Activated CD4-positive, alpha-beta T cell treated with anti-CD3 and anti-CD28 coated beads for 36 hours (primary cell): ENCODE measurements at regions of chr10 and their contacts with region 1.

Region 1: DNA sequence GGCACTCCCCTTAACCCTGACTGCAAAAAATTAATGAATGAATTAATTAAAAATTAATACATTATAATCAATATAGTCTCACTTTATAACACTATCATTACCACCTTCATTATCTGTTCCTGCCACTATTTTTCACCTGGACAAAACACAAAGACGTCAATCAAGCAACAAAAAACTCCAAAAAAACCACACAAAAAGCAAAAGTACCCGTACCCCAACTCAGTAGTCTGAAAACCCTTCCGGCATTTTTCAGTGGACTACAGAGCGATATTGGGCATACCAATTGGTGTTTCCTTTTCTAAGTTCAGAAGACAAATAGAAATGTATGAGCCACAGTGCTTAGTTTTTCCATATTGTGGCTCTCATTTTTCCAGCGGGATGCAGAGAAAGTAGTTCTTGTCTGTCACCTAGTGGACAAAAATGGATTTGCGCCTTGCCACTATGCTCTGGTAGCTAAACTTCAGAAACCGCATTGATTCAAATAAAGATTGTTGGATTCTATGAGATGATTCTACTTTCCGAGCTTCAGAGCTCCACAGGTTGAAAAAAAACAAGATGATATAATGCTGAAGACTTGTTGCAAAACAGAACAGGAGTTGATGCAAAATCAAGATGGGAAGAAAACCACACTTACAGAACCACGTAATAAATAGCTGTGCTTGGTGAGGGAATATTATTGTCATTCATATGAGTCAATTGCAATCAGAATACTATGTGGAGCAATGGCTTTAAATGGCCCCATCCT is 50.6 kb upstream of the ITGB1 start:
- DNase-seq: peak; percentile 80
- ATAC-seq: peak; percentile 61
- H3K4me3 Mint-ChIP-seq: peak overlapping the region; percentile 40
- H3K27ac Mint-ChIP-seq: peak overlapping the region; percentile 67
- H3K4me1 Mint-ChIP-seq: peaks cover 41% of the 10 kb centered on the region
- H3K27me3 Mint-ChIP-seq: peaks cover 7% of the 10 kb centered on the region

Region 2: DNA sequence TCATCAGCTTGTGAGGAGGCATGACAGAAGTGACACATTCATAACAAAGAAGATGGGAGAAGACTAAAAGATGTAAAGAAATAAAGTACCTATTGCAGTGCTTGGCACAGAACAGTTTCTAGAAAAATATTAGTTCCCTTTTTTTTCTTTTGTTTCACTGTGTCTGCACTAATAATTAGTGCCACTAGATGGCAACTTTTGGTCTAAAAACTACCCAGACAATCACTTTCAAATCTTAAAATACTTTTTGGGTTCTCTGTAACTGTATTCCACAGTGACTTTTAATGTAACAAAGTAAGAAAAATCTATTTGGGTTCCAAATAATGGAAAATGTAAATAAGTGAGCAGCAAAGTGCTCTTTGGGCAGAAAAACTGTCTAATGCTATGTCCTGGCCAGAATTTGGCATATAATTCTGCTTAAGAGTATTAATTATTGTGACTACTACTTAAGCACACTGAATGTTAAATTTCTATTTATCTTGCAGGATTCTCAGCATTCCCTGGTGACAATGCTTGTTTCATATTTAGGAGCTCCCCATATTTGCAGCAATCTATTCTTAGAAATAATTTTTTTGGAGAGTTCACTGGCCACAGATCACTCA is 817.7 kb before region 1 on chr10:
- CTCF ChIA-PET with region 1: no interaction called
- POLR2A ChIA-PET with region 1: no interaction called
- intact Hi-C with region 1: loop called in 1 of 2 experiments (anchors 1 kb)
- DNase-seq: no peak
- ATAC-seq: no peak
- H3K4me3 Mint-ChIP-seq: no peak overlapping the region
- H3K27ac Mint-ChIP-seq: no peak overlapping the region
- H3K4me1 Mint-ChIP-seq: peaks cover 2% of the 10 kb centered on the region
- H3K27me3 Mint-ChIP-seq: no peaks in the 10 kb centered on the region

Region 3: DNA sequence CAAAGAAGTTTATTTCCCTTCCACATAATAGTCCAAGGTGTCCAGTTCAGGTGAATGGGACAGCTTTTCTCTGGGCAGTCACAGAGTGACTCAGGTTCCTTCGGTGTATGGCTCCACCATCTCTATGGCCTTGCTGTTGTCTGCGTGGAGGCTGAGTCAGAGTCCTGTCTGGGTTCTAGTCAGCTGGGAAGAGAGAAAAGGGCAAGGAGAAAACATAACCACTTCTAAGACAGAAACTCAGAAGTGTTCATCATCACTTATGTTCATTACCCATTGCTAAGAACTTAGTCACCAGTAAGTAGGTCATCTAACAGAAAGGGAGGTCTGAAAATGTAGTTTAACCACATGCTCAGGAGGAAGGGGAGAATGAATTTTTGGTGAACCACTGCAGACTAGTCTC is 595.2 kb before region 1 on chr10:
- CTCF ChIA-PET with region 1: no interaction called
- POLR2A ChIA-PET with region 1: no interaction called
- intact Hi-C with region 1: no loop called
- DNase-seq: peak; percentile 73
- ATAC-seq: peak; percentile 98
- H3K4me3 Mint-ChIP-seq: no peak overlapping the region
- H3K27ac Mint-ChIP-seq: no peak overlapping the region
- H3K4me1 Mint-ChIP-seq: peaks cover 9% of the 10 kb centered on the region
- H3K27me3 Mint-ChIP-seq: no peaks in the 10 kb centered on the region

Region 4: DNA sequence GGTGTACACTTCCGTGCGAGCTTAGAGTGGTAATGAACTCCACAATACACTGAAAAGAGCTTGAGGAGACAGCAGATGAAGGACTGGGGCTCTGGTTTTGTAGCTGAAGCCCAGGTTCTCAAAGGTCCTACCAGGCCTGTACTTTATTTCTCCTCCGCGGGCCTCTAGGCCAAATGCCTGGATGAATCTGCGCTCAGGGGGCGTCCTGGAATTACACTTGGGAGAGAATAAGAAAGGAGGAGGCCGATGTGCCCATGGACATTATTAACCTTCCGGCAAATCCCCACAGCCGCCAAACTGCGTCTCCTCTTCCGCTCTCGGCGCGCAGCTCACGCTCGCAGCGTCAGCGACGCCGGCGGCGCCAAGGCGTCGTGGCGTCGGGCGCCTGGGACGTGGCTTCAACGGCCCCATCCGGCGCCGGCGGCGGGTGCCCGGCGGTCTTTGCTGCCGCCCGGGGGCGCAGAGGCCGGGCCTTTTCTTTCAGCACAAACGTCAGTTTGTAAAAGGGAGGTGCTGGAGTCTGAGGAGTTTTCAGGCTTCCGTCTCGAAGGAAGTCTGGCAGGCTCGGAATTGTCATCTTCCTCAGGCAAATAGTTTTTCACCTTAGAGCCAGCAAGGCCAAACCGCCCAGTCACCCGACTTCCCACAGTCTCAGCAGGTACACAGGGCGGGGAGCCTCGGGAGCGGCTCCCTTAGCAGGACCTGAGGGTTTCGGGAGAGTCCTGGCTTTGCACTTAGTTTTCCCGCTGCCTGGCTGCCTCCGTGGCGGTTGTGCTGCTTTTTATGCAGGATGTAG is 562.7 kb before region 1 on chr10 and contains the start of gene CCDC7:
- CTCF ChIA-PET with region 1: no interaction called
- POLR2A ChIA-PET with region 1: no interaction called
- intact Hi-C with region 1: loop called in 1 of 2 experiments (anchors 2 kb)
- DNase-seq: peak; percentile 91
- ATAC-seq: peak; percentile 97
- H3K4me3 Mint-ChIP-seq: peak within 1 kb of the TSS; percentile 82
- H3K27ac Mint-ChIP-seq: peak within 1 kb of the TSS; percentile 99
- H3K4me1 Mint-ChIP-seq: peaks cover 10% of the 10 kb centered on the region
- H3K27me3 Mint-ChIP-seq: no peaks in the 10 kb centered on the region
- total RNA-seq, gene CCDC7: 9.0 TPM

Region 5: GRCh38 chr10:32795598-32796183 is 213.0 kb before region 1 on chr10:
- CTCF ChIA-PET with region 1: interaction called, 5 read pairs
- POLR2A ChIA-PET with region 1: no interaction called
- intact Hi-C with region 1: loop called (anchors 1 kb)
- DNase-seq: no peak
- ATAC-seq: no peak
- H3K4me3 Mint-ChIP-seq: no peak overlapping the region
- H3K27ac Mint-ChIP-seq: no peak overlapping the region
- H3K4me1 Mint-ChIP-seq: peaks cover 2% of the 10 kb centered on the region
- H3K27me3 Mint-ChIP-seq: no peaks in the 10 kb centered on the region

Region 6: DNA sequence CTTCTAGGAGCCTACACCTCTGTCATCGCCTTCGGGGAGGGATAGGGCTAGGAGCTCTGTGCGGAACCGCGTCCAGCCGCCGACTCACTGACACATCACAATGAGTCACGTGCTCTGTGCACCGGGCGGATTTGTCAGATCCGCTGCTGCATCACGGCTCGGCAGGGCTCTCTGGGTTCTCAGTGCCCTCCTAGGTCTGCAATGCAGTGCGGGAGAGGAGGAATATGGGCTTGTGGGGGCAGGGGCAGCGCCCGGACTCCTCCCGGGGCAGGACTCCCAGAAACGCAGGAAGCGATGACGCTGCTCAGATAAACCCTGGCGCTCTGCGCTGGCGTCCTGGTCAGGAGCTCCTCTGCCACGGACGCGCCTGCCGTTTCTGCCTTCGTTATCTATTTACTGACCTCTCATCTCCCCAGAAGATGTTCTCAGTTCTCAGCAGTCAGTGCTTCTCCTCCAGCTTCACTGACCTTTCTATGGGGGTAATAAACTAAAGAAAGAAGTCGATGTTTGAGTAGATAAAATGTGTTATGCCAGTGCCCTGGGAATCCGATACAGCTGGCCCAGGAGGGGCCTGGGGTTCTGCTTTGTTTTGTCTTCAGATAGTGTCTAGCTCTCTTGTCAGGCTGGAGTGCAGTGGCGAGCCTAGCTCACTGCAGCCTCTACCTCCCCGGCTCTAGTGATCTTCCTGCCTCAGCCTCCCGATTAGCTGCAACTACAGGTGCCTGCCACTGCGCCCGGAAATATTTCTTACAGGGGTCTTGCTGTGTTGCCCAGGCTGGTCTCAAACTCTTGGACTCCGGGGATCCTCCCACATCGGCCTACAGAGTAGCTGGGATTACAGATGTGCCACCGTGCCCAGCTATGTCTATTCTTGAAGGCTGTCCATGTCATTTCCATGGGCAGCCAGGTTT is 27.9 kb before region 1 on chr10:
- CTCF ChIA-PET with region 1: interaction called, 11 read pairs
- POLR2A ChIA-PET with region 1: no interaction called
- intact Hi-C with region 1: loop called (anchors 1 to 2 kb)
- DNase-seq: peak; percentile 92
- ATAC-seq: peak; percentile 99
- H3K4me3 Mint-ChIP-seq: peak overlapping the region; percentile 83
- H3K27ac Mint-ChIP-seq: peak overlapping the region; percentile 91
- H3K4me1 Mint-ChIP-seq: peaks cover 29% of the 10 kb centered on the region
- H3K27me3 Mint-ChIP-seq: no peaks in the 10 kb centered on the region

Region 7: DNA sequence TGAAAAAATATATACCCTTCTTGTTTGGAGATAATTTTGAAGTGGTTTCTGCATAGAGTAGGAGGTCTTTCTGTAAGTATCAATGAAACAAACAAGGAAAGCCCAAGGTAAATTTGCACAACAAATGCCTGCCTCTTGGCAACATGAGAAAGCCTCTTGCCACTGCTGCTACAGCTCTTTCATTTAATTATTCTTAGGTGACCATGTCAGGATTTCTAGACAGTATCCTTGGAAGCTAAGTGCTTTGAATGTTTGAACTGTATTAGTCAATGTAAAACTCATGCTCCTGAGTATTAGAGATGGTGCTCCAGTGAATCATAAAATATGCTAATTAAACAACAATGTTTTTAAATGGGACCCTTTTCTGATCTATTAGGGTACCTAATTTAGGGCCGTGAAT is 30.5 kb after region 1 on chr10:
- CTCF ChIA-PET with region 1: no interaction called
- POLR2A ChIA-PET with region 1: no interaction called
- intact Hi-C with region 1: no loop called
- DNase-seq: no peak
- ATAC-seq: no peak
- H3K4me3 Mint-ChIP-seq: no peak overlapping the region
- H3K27ac Mint-ChIP-seq: no peak overlapping the region
- H3K4me1 Mint-ChIP-seq: no peaks in the 10 kb centered on the region
- H3K27me3 Mint-ChIP-seq: peaks cover 2% of the 10 kb centered on the region

Region 8: DNA sequence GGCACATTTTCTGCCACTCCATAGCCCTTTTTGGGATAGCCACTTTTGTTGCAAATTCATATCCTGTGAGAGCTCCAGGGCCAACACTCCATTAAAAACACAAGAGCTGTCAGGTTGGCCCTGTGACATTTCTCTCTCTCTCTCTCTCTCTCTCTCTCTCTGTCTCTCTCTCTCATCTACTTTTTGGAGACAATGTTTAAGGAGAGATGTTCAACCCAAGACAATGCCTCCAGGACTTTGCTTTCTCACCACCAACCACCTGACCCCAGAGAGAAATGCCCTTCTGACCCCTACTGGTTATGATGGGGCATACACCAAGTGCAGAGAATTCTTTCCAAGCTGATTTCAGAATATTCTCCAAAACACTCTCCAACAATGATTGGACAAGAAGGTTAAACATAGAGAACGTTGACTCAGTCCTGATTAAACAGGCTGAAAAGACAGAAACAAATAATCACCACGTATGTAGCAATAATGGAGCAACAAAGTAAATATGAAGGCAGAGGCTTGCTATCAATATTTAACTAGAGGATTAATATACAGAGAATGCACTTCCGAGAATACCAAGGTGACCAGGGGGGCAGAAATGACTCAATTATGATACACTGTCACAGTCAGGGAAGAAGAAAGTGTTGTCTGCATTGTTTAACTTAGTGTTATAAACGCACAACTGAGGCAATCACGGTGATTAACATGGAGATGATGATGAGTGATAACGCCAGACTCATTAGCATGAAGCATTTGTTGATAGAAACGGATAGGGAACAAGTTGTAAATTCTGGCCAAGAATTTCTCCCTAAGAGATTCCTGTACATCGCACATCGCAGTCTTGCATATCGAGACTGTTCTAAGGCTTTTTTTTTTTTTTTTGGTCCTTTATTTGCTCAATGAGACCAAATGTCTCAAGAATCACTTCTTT is 147.3 kb after region 1 on chr10:
- CTCF ChIA-PET with region 1: interaction called, 6 read pairs
- POLR2A ChIA-PET with region 1: no interaction called
- intact Hi-C with region 1: loop called (anchors 1 kb)
- DNase-seq: peak; percentile 52
- ATAC-seq: peak; percentile 63
- H3K4me3 Mint-ChIP-seq: no peak overlapping the region
- H3K27ac Mint-ChIP-seq: peak overlapping the region; percentile 34
- H3K4me1 Mint-ChIP-seq: peaks cover 41% of the 10 kb centered on the region
- H3K27me3 Mint-ChIP-seq: peaks cover 7% of the 10 kb centered on the region